ENCODE measurements at regions of chr15 and their contacts with region 1.

Region 1: GRCh38 chr15:55846116-55846707 is 103.3 kb upstream of the PRTG start:
- DNase-seq: peak; percentile 55
- ATAC-seq: peak; percentile 77
- H3K4me3 Mint-ChIP-seq: no peak overlapping the region
- H3K27ac Mint-ChIP-seq: no peak overlapping the region
- H3K4me1 Mint-ChIP-seq: no peaks in the 10 kb centered on the region
- H3K27me3 Mint-ChIP-seq: no peaks in the 10 kb centered on the region
- CTCF ChIP-seq: peak; percentile 85

Region 2: DNA sequence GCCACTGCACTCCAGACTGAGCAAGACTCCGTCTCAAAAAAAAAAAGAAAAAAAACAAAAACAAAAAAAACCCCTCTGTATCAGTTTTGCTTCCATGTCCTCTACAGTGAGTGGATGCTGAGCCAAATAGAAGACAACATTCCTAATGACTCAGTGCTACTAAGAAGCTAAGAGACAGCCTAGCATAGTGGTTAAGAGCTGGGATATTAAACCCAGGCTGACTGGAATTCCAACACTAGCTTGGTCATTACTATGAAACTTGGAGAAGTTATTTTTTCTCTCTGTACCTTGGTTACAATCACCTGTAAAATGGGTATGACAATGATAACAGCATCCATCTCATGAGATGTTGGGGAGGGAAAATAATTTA is 197.2 kb before region 1 on chr15:
- CTCF ChIA-PET with region 1: interaction called, 42 read pairs
- POLR2A ChIA-PET with region 1: no interaction called
- intact Hi-C with region 1: loop called (anchors 2 kb)
- DNase-seq: no peak
- ATAC-seq: no peak
- H3K4me3 Mint-ChIP-seq: no peak overlapping the region
- H3K27ac Mint-ChIP-seq: no peak overlapping the region
- H3K4me1 Mint-ChIP-seq: no peaks in the 10 kb centered on the region
- H3K27me3 Mint-ChIP-seq: peaks cover under 1% of the 10 kb centered on the region
- CTCF ChIP-seq: no peak

Region 3: DNA sequence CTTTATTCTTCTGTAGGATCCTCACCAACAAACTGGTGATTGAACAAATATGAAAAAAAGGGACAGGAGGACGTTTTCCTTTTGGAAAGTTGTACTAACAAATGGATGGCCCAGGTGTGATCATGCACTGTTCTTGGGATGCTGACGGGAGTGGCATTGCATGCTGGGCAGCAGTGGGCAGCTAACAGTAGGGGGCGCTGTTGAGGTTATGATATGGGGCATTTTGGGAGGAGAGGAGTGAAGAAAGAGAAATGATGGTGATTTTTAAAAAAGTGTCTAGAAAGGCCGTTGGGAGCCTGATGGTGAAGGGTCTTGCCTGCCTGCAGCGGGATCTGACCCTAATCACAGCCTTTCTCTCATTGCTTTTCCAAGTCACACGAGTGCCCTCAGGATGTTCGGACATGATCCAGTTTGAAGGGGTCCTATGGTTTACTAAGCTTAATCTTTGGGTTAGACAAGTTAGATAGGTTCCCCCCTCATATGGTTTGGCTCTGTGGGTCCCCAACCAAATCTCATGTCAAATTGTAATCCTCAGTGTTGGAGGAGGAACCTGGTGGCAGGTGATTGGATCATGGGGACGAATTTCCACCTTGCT is 57.0 kb before region 1 on chr15:
- CTCF ChIA-PET with region 1: interaction called, 13 read pairs
- POLR2A ChIA-PET with region 1: no interaction called
- intact Hi-C with region 1: loop called (anchors 5 kb)
- DNase-seq: peak; percentile 71
- ATAC-seq: peak; percentile 39
- H3K4me3 Mint-ChIP-seq: no peak overlapping the region
- H3K27ac Mint-ChIP-seq: no peak overlapping the region
- H3K4me1 Mint-ChIP-seq: no peaks in the 10 kb centered on the region
- H3K27me3 Mint-ChIP-seq: peaks cover 2% of the 10 kb centered on the region
- CTCF ChIP-seq: peak; percentile 75

Region 4: DNA sequence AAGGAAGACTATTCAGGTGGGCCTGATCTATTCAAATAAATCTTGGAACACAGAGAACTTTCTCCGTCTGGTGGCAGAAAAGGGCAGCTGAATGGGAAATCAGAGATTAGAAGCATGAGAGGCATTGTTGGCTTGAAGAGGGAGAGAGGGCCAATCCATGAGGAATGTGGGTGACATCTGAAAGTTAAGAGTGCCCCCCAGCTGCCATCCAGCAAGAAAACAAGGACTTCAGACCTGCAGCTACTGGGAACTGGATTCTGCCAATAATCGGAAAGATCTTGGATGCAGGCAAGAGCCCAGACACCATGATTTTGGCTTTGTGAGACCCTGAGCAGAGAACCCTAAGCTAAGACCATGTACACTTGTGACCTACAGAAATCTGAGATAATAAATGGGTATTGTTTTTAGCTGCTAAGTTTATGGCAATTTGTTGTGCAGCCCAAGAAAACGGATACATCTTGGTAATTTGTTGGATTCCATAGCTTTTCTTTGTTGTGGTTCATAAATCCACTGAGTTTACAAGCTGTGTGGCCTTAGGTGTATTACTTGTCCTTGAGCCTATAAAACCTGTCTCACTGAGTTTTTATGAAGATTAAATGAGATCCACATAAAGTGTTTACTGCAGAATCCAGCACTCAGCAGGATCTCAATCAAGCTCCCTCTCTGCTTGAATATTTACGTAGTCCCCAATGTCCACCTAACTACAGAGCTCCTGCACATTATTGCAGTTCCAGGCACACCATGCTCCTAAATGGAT is 21.2 kb before region 1 on chr15:
- CTCF ChIA-PET with region 1: interaction called, 11 read pairs
- POLR2A ChIA-PET with region 1: no interaction called
- intact Hi-C with region 1: no loop called
- DNase-seq: no peak
- ATAC-seq: no peak
- H3K4me3 Mint-ChIP-seq: no peak overlapping the region
- H3K27ac Mint-ChIP-seq: no peak overlapping the region
- H3K4me1 Mint-ChIP-seq: peaks cover 11% of the 10 kb centered on the region
- H3K27me3 Mint-ChIP-seq: peaks cover 2% of the 10 kb centered on the region
- CTCF ChIP-seq: no peak